Activated naive CD4-positive, alpha-beta T cell treated with anti-CD3 and anti-CD28 coated beads for 36 hours (primary cell): ENCODE measurements at regions of chr9 and their contacts with region 1.

Region 1: DNA sequence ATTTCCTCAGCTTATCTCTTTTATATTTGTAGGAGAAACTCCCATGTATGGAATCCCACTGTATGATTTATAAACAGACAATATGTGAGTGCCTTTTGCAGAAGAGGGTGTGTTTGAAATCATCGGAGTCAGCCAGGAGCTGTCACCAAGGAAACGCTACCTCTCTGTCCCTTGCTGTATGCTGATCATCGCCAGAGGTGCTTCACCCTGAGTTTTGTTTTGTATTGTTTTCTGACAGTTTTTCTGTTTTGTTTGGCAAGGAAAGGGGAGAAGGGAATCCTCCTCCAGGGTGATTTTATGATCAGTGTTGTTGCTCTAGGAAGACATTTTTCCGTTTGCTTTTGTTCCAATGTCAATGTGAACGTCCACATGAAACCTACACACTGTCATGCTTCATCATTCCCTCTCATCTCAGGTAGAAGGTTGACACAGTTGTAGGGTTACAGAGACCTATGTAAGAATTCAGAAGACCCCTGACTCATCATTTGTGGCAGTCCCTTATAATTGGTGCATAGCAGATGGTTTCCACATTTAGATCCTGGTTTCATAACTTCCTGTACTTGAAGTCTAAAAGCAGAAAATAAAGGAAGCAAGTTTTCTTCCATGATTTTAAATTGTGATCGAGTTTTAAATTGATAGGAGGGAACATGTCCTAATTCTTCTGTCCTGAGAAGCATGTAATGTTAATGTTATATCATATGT is 18.0 kb upstream of the CTSL start:
- DNase-seq: no peak
- H3K4me3 Mint-ChIP-seq: no peak overlapping the region
- H3K27ac Mint-ChIP-seq: no peak overlapping the region
- H3K4me1 Mint-ChIP-seq: peaks cover 34% of the 10 kb centered on the region
- H3K27me3 Mint-ChIP-seq: peaks cover 3% of the 10 kb centered on the region

Region 2: DNA sequence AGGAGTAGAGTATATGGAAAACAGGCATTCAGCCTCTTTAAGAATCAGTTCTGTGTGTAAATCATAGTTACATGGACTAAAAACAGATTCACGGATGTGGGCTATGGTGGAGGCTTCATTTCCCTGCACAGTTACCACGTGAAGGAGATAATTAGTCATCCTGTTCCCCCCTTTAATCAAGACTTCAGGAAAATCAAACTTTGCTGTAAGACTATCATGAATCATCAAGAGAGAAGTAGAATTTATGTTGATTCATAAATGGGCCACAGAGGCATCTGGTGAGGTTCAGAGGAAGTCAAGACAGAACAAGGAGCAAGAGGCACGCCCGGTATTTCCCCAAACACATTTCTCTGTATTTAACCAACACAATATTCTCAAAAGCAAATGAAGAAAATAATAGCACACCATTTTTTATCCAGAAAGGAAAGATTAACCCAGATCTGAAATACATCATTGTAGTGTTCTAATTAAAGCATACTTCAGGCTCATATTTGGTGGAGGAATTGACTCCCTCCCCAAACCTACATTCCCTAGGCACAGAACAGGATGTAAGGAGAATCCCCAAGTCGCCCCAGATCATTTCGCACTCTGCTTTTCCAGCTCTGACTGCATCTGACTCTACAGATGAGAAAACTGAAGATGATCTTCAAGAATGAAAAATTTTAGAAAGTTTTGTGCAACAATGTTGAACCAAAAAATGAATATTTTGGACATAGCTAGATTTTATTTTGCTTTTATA is 584.8 kb before region 1 on chr9:
- CTCF ChIA-PET with region 1: no interaction called
- intact Hi-C with region 1: loop called (anchors 1 kb)
- DNase-seq: peak; percentile 51
- H3K4me3 Mint-ChIP-seq: no peak overlapping the region
- H3K27ac Mint-ChIP-seq: peak overlapping the region; percentile 6
- H3K4me1 Mint-ChIP-seq: peaks cover 10% of the 10 kb centered on the region
- H3K27me3 Mint-ChIP-seq: peaks cover 24% of the 10 kb centered on the region

Region 3: DNA sequence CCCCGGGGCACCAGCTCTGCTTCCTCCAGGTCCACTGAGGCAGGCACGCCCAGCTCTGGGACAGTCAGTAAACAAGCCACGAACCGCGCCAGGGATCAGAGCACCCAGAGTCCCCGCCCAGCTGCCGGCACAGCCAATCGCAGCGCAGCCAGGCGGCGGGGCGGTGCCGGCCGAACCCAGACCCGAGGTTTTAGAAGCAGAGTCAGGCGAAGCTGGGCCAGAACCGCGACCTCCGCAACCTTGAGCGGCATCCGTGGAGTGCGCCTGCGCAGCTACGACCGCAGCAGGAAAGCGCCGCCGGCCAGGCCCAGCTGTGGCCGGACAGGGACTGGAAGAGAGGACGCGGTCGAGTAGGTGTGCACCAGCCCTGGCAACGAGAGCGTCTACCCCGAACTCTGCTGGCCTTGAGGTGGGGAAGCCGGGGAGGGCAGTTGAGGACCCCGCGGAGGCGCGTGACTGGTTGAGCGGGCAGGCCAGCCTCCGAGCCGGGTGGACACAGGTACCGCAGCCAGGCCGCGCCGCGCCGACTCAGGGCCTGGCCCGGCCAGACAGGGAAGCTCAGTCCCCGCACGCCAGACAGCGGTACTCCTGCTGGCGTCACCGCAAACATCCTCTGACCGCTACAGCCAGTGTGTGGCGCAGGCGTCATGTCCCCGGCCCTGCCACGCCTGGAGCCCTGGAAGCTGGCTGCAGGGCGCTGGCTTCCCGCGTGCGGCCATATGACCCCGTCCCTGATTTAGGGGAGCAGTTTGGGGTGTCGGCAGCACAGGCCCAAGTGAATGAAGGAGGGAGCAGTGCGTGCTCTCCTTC is 18.1 kb after region 1 on chr9 and contains the start of gene CTSL:
- CTCF ChIA-PET with region 1: interaction called, 8 read pairs
- intact Hi-C with region 1: loop called (anchors 2 kb)
- DNase-seq: peak; percentile 58
- H3K4me3 Mint-ChIP-seq: peak within 1 kb of the TSS; percentile 80
- H3K27ac Mint-ChIP-seq: no peak within 1 kb of the TSS
- H3K4me1 Mint-ChIP-seq: peaks cover 33% of the 10 kb centered on the region
- H3K27me3 Mint-ChIP-seq: no peaks in the 10 kb centered on the region
- total RNA-seq, gene CTSL: 0.81 to 0.86 TPM

Region 4: DNA sequence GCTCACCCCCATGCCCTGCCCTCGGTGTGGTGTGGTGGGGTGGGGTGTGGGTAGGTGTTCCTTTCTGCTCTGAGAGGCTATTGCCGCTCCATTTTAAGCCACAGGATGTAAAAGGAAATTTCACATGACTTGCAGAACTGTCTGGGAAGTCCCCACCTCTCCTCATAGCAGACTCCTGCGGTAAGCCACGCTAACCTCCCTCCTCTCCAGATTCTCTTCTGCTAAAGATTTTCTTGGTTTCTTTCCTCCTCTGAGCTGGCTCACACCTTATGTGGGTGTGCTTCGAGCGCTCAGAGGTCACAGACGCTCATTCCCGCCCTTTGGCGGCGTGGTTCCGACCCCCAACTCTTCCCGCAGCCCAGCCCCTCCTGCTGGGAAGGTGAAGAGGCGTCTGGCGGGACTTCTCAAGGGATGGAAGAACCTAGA is 299.3 kb after region 1 on chr9:
- CTCF ChIA-PET with region 1: no interaction called
- intact Hi-C with region 1: loop called (anchors 2 kb)
- DNase-seq: peak; percentile 88
- H3K4me3 Mint-ChIP-seq: no peak overlapping the region
- H3K27ac Mint-ChIP-seq: peak overlapping the region; percentile 51
- H3K4me1 Mint-ChIP-seq: peaks cover 12% of the 10 kb centered on the region
- H3K27me3 Mint-ChIP-seq: peaks cover 4% of the 10 kb centered on the region

Region 5: DNA sequence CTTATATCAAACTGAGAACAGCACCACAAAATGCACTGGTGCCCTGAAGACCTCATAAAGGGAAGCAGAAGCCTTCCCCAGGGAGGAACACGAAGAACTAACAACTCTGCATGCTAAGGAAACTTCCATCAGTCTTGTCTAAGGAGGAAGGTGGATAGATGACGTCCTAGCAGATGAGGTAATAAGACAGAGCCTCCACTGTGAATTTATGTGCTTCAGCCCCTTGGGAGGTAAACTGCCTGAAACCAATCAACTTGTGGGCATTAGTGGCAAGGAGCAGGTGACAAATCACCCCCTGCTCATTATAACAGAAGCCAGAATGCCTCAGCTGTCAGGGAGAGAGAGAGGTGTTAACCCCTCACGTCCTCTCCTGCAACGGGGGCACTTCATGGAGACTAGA is 631.4 kb after region 1 on chr9:
- CTCF ChIA-PET with region 1: no interaction called
- intact Hi-C with region 1: no loop called
- DNase-seq: no peak
- H3K4me3 Mint-ChIP-seq: no peak overlapping the region
- H3K27ac Mint-ChIP-seq: no peak overlapping the region
- H3K4me1 Mint-ChIP-seq: no peaks in the 10 kb centered on the region
- H3K27me3 Mint-ChIP-seq: no peaks in the 10 kb centered on the region